Mammary epithelial cell (primary cell): ENCODE measurements at regions of chr14 and their contacts with region 1.

Region 1: DNA sequence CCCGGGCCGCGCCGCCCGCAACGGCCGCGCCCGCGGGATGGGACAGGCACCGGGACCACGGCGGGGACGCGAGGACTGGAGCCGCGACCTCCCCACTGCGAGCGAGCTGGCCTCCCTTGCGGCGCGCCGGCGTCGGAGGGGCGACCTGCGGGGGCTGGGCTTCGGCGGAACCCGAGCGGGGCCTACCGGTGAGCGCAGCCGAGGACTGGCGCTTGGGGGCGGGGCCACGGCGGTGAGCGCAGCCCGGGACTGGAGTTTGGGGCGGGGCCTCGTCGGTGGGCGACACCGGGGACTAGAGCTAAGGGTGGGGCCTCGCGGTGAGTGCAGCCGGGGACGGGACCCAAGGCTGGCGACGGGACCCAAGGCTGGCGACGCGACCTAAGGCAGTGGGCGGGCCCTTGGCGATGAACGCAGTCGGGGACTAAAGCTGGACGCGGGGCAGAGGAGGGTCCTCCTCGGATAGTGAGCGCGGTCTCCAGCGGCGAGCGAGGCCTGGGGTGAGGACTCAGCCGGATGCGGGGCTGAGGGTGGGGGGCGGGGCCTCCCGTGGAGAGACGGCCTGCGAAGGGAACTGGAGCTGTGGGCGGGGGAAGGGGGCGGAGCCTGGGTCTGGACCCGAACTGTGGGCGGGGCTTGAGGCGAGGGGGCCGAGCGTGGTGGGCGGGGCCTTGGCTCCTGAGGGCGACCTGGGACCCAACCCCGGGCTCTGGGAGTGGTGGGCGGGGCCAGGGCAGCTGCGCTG is at the start of gene BRF1:
- DNase-seq: peak; percentile 93
- H3K4me3 ChIP-seq: peak within 1 kb of the TSS; percentile 65 to 88 (median 71)
- H3K27ac ChIP-seq: peak within 1 kb of the TSS; percentile 61
- H3K4me1 ChIP-seq: peaks cover 6% of the 10 kb centered on the region
- H3K27me3 ChIP-seq: no peaks in the 10 kb centered on the region
- CTCF ChIP-seq: no peak
- total RNA-seq, gene BRF1: 31.4 to 37.0 TPM

Region 2: DNA sequence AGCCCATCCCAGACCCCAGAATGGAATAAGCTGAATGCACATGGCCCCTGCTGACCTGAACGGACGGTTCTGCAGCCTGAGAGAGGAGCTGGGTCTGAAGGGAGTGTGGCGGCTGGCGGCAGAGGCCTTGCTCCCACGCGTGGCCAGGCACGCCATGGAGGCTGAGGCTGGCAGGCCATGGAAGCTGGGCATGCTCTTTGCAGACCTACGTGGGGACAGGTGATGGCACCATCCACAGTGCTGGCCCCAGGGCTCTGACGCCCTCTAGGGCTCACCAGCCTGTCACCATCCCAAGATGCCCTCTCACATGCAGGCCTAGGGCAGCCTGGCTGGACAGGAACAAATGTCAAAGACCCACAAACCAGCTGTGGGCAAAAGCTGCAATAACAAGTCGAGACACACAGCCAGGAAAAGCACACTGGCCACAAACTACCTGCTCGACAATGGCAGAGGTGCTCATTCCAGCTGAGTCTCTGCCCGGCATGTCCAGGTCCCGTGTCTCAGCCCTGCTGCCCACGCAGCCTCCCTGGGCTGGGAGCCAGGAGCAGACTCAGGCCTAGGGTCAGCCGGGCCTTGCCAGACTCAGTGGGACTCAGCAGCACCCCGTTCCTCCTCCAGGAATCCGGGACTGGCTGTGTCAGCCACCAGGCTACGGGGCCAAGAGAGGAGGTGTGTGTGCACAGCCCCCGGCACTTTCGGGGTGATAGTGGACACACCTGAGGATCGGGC is 33.0 kb before region 1 on chr14:
- CTCF ChIA-PET with region 1: no interaction called
- dilution Hi-C with region 1: loop called (anchors 5 kb)
- in situ Hi-C with region 1: no loop called
- intact Hi-C with region 1: no loop called
- DNase-seq: peak; percentile 15
- H3K4me3 ChIP-seq: no peak overlapping the region
- H3K27ac ChIP-seq: no peak overlapping the region
- H3K4me1 ChIP-seq: peaks cover 9% of the 10 kb centered on the region
- H3K27me3 ChIP-seq: no peaks in the 10 kb centered on the region
- CTCF ChIP-seq: peak in 1 of 2 donors; percentile 21

Region 3: GRCh38 chr14:105351920-105352851 is 51.2 kb after region 1 on chr14:
- CTCF ChIA-PET with region 1: no interaction called
- dilution Hi-C with region 1: loop called (anchors 5 kb)
- in situ Hi-C with region 1: no loop called
- intact Hi-C with region 1: loop called (anchors 1 kb)
- DNase-seq: peak; percentile 82
- H3K4me3 ChIP-seq: no peak overlapping the region
- H3K27ac ChIP-seq: no peak overlapping the region
- H3K4me1 ChIP-seq: no peaks in the 10 kb centered on the region
- H3K27me3 ChIP-seq: no peaks in the 10 kb centered on the region
- CTCF ChIP-seq: peak; percentile 85 to 90

Region 4: DNA sequence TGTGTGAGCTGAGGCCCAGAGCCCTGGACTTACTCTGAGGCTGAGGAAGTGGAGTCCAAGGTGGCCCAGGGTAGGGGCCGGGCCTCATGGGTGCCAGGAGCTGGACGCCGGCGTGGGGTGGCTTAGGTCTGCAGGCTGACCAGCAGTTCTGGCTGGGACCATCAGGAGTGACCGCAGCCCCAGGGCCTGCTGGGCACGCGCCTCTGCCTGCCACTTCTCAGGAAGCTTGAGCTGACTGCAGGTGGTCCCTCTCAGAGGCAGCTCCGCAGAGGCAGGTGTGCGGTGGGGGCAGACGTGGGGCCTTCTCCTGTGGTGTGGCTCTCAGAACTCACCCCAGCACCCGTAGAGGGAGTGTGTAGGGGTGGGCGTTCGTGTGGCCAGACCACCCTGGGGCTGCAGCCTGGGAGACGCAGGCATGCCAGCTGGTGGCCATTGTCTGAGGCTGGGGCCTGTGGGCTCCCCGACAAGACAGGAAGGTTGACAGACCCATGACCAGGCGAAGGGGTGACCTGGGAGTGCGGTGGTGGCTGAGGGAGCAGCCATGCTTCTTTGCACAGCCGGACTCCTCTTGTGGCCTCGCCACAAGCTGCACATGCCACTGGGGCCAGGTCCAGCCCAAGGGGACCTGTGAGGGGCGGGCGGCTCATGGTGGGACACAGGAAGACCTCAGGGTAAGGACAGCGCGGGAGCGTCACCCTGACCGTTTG is 57.3 kb after region 1 on chr14:
- CTCF ChIA-PET with region 1: no interaction called
- dilution Hi-C with region 1: loop called (anchors 5 kb)
- in situ Hi-C with region 1: no loop called
- intact Hi-C with region 1: no loop called
- DNase-seq: no peak
- H3K4me3 ChIP-seq: no peak overlapping the region
- H3K27ac ChIP-seq: no peak overlapping the region
- H3K4me1 ChIP-seq: no peaks in the 10 kb centered on the region
- H3K27me3 ChIP-seq: no peaks in the 10 kb centered on the region
- CTCF ChIP-seq: no peak

Region 5: DNA sequence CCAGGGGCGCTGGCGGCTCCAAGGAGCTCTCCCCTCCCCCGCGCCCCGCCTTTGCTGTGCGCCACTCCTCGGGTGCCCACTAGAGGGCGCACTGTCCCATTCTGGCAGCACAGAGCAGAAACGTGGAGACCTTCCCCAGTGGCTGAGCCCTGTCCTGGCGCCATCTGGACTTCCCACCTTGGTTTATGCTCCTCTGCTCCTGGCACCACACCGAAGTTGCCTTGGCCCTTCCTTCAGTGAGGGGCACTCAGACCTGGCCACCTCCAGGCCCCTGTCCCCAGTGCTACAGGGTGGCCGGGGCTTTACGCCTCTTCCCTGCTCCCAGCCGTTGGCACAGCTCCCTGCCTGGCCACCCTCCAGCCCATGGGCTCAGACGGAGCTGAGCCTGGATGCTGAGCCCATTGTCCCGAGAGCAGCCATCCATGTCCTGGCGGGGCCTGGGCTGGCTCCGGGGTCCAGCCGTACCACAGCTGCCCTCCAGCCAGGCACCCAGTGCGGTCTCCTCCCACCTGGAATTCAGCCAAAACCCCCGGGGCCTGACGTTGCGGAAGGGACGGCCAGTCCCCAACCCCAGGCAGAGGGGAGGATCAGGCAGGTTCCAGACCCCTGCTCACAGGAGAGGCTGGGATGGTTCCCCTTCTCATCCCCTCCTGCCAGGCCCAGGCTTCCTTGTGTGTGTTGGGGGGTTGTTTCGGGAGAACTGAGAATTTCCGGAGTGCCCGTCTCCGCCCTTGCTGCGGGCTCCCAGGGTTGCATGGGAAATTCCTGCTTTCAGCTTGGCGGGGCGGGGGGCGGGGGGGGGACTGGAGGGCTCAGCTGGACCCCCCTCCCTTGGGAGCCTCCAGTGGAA is 180.2 kb after region 1 on chr14:
- CTCF ChIA-PET with region 1: no interaction called
- dilution Hi-C with region 1: no loop called
- in situ Hi-C with region 1: no loop called
- intact Hi-C with region 1: loop called (anchors 2 kb)
- DNase-seq: peak; percentile 80
- H3K4me3 ChIP-seq: peak overlapping the region in 2 of 3 experiments; percentile 8 to 30
- H3K27ac ChIP-seq: peak overlapping the region; percentile 96
- H3K4me1 ChIP-seq: peaks cover 50% of the 10 kb centered on the region
- H3K27me3 ChIP-seq: no peaks in the 10 kb centered on the region
- CTCF ChIP-seq: peak; percentile 93 to 99